ENCODE measurements at regions of chr3 and their contacts with region 1.

Region 1: GRCh38 chr3:107850669-107851068 is 240.2 kb downstream of the CD47 start:
- DNase-seq: no peak
- ATAC-seq: no peak
- H3K4me3 ChIP-seq: no peak overlapping the region
- H3K4me3 Mint-ChIP-seq: no peak overlapping the region
- H3K27ac ChIP-seq: no peak overlapping the region
- H3K27ac Mint-ChIP-seq: no peak overlapping the region
- H3K4me1 ChIP-seq: no peaks in the 10 kb centered on the region
- H3K4me1 Mint-ChIP-seq: no peaks in the 10 kb centered on the region
- H3K27me3 ChIP-seq: no peaks in the 10 kb centered on the region
- H3K27me3 Mint-ChIP-seq: no peaks in the 10 kb centered on the region

Region 2: DNA sequence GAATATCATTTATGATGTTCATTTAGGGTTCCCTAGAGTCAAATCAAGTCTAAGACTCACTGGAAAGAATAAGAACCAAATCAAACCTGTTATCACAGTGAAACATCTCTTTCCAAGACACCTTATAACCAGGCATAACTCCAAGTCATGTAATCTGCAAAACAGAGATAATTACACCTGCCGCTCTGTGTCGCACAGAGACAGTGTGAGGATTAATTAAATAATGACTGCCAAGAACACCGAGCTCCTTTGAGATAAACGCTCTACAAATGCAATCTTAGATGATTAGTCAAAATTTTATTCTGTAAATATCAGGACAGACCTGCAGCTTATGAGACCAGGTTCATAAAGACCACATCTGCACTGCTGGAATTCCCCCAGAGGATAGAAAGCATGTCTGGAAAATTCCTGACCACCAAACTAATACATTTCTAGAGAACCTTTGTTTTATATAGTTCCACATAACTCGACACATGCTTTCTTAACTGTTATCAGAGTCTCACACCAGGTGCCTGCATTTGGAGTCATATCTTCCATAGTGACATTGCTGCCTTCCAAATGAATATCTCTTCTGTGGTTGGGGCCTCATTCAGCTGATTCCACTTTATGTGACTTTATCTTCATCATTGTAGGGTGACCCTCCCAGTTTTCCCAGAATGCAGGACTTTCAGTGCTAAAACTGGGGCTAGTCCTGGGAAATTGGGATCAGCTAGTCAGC is 12.6 kb before region 1 on chr3:
- CTCF ChIA-PET with region 1: interaction called in 1 of 2 experiments, 3 read pairs
- POLR2A ChIA-PET with region 1: interaction called in 1 of 2 experiments, 10 read pairs
- DNase-seq: no peak
- ATAC-seq: no peak
- H3K4me3 ChIP-seq: no peak overlapping the region
- H3K4me3 Mint-ChIP-seq: no peak overlapping the region
- H3K27ac ChIP-seq: no peak overlapping the region
- H3K27ac Mint-ChIP-seq: no peak overlapping the region
- H3K4me1 ChIP-seq: no peaks in the 10 kb centered on the region
- H3K4me1 Mint-ChIP-seq: no peaks in the 10 kb centered on the region
- H3K27me3 ChIP-seq: peaks cover 0 to 5% of the 10 kb centered on the region in 2 experiments
- H3K27me3 Mint-ChIP-seq: no peaks in the 10 kb centered on the region

Measured in T-cell (primary cell).